Mammary epithelial cell (primary cell): ENCODE measurements at regions of chr5 and their contacts with region 1.

Region 1: GRCh38 chr5:154038707-154039457 is at the starts of genes FAM114A2 and MFAP3:
- DNase-seq: peak; percentile 89
- H3K4me3 ChIP-seq: peak within 1 kb of the TSS; percentile 81 to 97 (median 94)
- H3K27ac ChIP-seq: peak within 1 kb of the TSS; percentile 67
- H3K4me1 ChIP-seq: peaks cover 7% of the 10 kb centered on the region
- H3K27me3 ChIP-seq: no peaks in the 10 kb centered on the region
- CTCF ChIP-seq: no peak
- total RNA-seq, gene FAM114A2: 23.5 to 25.2 TPM
- total RNA-seq, gene MFAP3: 32.4 to 118 TPM

Region 2: GRCh38 chr5:153974131-153974812 is 64.6 kb before region 1 on chr5:
- CTCF ChIA-PET with region 1: no interaction called
- dilution Hi-C with region 1: no loop called
- in situ Hi-C with region 1: no loop called
- intact Hi-C with region 1: loop called (anchors 2 kb)
- DNase-seq: peak; percentile 25
- H3K4me3 ChIP-seq: no peak overlapping the region
- H3K27ac ChIP-seq: no peak overlapping the region
- H3K4me1 ChIP-seq: no peaks in the 10 kb centered on the region
- H3K27me3 ChIP-seq: no peaks in the 10 kb centered on the region
- CTCF ChIP-seq: peak; percentile 72 to 75

Region 3: GRCh38 chr5:153991168-153991567 is 47.7 kb before region 1 on chr5:
- CTCF ChIA-PET with region 1: no interaction called
- dilution Hi-C with region 1: loop called (anchors 5 kb)
- in situ Hi-C with region 1: no loop called
- intact Hi-C with region 1: no loop called
- DNase-seq: peak; percentile 60
- H3K4me3 ChIP-seq: no peak overlapping the region
- H3K27ac ChIP-seq: no peak overlapping the region
- H3K4me1 ChIP-seq: peaks cover 3% of the 10 kb centered on the region
- H3K27me3 ChIP-seq: no peaks in the 10 kb centered on the region
- CTCF ChIP-seq: no peak

Region 4: DNA sequence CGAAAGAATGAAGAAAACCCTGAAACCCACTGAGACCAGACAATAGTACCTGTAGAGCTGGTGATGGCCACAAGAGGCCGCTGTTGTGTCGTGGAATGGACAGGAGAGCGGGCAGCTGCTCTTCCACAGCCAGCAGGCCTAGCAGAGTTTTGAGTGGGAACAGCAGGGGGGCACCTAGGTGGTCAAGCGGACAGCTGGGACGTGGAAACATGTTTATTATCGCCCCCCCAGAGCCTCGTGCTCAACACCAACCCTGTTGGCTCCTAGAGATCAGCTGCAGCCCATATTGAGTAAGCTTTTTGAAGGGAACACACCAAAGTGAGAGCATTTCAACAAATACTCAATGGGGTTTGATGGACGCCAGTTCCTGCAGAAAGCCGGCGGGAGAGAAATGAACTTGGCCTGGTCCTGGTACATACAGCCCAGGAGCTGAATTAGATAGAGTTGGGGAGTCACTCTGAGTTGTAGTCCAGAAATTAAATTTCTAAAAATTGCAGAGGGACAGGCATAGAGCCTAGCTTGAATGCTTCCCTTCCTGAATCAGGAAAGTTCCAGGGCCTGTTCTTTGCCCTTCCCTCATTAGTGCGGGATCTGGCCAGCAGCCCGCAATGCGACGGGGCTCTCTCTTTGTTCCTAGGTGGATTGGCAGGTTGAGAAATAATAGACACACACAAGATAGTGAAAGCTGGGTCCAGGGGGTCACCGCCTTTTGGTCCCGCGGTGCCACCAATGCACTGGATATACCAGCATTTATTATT is 33.7 kb after region 1 on chr5:
- CTCF ChIA-PET with region 1: no interaction called
- dilution Hi-C with region 1: no loop called
- in situ Hi-C with region 1: no loop called
- intact Hi-C with region 1: no loop called
- DNase-seq: peak; percentile 56
- H3K4me3 ChIP-seq: no peak overlapping the region
- H3K27ac ChIP-seq: no peak overlapping the region
- H3K4me1 ChIP-seq: peaks cover 3% of the 10 kb centered on the region
- H3K27me3 ChIP-seq: no peaks in the 10 kb centered on the region
- CTCF ChIP-seq: peak; percentile 82 to 90

Region 5: DNA sequence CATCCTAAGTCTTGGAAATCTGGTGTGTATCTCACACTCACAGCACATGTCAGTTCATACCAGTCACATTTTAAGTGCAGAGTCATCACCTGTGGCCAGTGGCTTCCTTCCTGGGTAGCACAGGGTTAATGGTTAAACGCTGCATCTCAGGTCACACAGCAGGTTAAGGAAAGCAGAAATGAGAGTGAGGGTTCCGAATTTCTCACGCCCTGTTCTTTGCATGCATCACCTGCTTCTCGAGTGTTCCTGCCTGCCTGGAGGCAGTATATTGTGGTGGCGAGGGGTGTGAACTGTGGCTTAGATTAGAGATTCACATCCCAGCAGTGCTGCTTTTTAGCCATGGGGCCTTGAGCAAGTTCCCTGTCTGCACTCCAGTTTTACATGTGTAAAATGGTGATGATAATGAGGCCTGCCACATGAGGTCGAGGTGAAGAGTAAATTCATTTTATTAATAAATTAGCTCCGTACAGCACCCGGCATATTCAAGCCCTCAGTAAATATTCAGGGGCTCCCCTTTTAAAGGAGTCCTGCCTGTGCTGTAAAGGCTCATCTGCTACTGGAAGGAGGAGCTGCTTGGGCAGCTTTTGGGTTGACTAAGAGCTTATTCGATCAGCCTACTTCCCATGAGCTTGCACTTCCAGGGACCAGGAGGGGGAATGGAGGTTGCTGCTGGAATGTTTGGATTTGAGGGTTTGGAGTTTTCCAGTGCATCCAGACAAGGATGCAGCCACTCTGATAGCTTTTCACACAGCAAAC is 345.8 kb after region 1 on chr5:
- CTCF ChIA-PET with region 1: no interaction called
- dilution Hi-C with region 1: no loop called
- in situ Hi-C with region 1: no loop called
- intact Hi-C with region 1: no loop called
- DNase-seq: no peak
- H3K4me3 ChIP-seq: no peak overlapping the region
- H3K27ac ChIP-seq: no peak overlapping the region
- H3K4me1 ChIP-seq: no peaks in the 10 kb centered on the region
- H3K27me3 ChIP-seq: no peaks in the 10 kb centered on the region
- CTCF ChIP-seq: no peak